ENCODE measurements at regions of chr6 and their contacts with region 1.

Region 1: DNA sequence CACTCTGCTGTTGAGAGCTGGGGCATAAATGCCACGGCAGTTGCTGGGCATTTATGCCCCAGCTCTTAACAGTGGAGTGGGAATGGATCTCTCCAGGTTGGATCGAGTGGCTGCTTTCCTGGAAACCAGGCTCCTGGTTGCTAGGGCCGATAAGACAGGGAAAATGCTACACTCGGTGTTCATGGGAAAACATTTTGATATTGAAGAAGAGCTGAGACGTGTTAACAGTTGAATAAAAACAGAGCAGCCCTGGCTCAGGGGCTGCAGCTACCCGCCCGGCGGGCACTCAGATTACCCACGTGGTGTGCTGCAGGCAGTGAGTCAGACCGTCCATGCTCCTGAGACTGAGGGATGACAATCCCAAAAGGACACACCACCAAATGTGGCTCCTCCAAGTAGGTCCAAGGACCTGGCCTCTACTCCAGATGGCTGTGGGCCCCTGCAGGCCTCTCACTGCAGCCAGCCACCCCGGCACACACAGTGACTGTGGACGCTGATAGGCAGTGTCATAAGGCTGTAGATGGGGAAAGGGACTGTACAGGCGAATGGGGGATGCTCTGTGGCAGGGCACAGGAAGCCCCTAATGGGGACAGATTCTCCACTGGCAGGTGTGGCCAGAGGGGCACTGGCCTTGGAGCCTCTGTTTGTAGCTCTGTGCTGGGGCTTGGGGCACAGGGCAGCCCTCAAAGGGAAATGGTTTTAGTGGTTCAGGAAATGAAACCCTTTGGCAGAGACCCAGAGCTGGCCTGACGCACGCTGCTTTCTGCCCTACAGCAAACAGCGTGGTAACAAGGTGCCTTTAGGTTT is 237.8 kb downstream of the LY86 start:
- DNase-seq: peak; percentile 50
- ATAC-seq: peak; percentile 87 to 90

Region 2: GRCh38 chr6:6701864-6702263 is 124.4 kb before region 1 on chr6:
- intact Hi-C with region 1: no loop called
- DNase-seq: no peak
- ATAC-seq: no peak

Region 3: GRCh38 chr6:6766230-6766905 is 59.9 kb before region 1 on chr6:
- intact Hi-C with region 1: loop called in 1 of 2 experiments (anchors 10 kb)
- DNase-seq: no peak
- ATAC-seq: no peak